K562 (cell line): ENCODE measurements at regions of chr1 and their contacts with region 1.

Region 1: DNA sequence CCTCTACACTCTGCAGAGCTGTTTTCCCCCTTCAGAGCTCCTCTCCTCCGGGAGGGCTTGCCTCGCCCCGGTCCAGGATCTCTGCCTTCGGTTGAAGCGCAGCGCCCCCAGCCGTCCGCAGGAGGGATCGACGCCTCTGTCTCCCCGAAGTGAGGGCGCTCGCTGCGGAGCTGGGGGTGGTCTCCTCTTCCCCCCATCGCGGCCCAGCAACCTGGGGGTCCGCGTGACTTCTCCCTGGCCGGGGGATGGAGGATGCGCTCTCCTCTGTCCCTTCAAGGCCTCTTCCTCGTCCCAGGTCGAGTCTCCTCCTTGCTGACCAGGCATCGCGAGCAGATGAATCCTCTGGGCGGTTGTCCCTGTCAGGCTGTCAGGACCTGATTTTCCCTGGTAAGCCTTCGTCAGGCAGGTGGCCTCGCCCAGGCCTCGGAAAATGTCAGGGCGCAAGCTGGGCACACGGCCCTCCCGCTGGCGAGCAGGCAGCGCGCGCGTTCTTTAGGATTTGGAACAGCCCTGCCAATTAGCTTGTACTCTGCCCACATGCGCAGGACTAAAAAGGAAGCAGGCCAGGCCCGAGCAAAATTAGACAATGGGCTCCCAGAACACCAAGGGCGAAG is 90.5 kb downstream of the EDEM3 start:
- DNase-seq: peak; percentile 74 to 82 (median 78)
- ATAC-seq: peak; percentile 98
- H3K4me3 ChIP-seq: no peak overlapping the region
- H3K27ac ChIP-seq: no peak overlapping the region
- H3K4me1 ChIP-seq: peaks cover 0 to 10% of the 10 kb centered on the region in 2 experiments; a peak in 2 of 5 replicates
- H3K27me3 ChIP-seq: peaks cover 6 to 10% of the 10 kb centered on the region in 2 experiments; a peak in 4 of 5 replicates
- CTCF ChIP-seq: peak; percentile 85 to 94 (median 91)
- EP300 ChIP-seq: no peak
- POLR2A ChIP-seq: no peak
- RAD21 ChIP-seq: peak; percentile 75 to 90

Region 2: GRCh38 chr1:183655562-183656075 is 1008.5 kb before region 1 on chr1:
- CTCF ChIA-PET with region 1: interaction called, 3 read pairs
- POLR2A ChIA-PET with region 1: no interaction called
- in situ Hi-C with region 1: no loop called
- intact Hi-C with region 1: loop called (anchors 5 kb)
- DNase-seq: peak; percentile 78 to 85 (median 83)
- ATAC-seq: peak; percentile 99
- H3K4me3 ChIP-seq: no peak overlapping the region
- H3K27ac ChIP-seq: no peak overlapping the region
- H3K4me1 ChIP-seq: no peaks in the 10 kb centered on the region
- H3K27me3 ChIP-seq: peaks cover 0 to 14% of the 10 kb centered on the region in 2 experiments; a peak in 1 of 5 replicates
- CTCF ChIP-seq: peak; percentile 82 to 95 (median 88)
- EP300 ChIP-seq: no peak
- POLR2A ChIP-seq: no peak
- RAD21 ChIP-seq: peak; percentile 84 to 91

Region 3: GRCh38 chr1:184075055-184076029 is 588.8 kb before region 1 on chr1:
- CTCF ChIA-PET with region 1: no interaction called
- POLR2A ChIA-PET with region 1: no interaction called
- in situ Hi-C with region 1: loop called (anchors 25 kb)
- intact Hi-C with region 1: loop called (anchors 5 kb)
- DNase-seq: peak; percentile 39 to 61 (median 45)
- ATAC-seq: peak; percentile 90
- H3K4me3 ChIP-seq: no peak overlapping the region
- H3K27ac ChIP-seq: no peak overlapping the region
- H3K4me1 ChIP-seq: no peaks in the 10 kb centered on the region
- H3K27me3 ChIP-seq: no peaks in the 10 kb centered on the region
- CTCF ChIP-seq: peak; percentile 50 to 87 (median 64); a peak in 4 of 6 replicates
- EP300 ChIP-seq: no peak
- POLR2A ChIP-seq: no peak
- RAD21 ChIP-seq: peak; percentile 84 to 86

Region 4: GRCh38 chr1:184379111-184379946 is 284.8 kb before region 1 on chr1:
- CTCF ChIA-PET with region 1: no interaction called
- POLR2A ChIA-PET with region 1: no interaction called
- in situ Hi-C with region 1: no loop called
- intact Hi-C with region 1: loop called (anchors 10 kb)
- DNase-seq: peak in 1 of 4 experiments; percentile 7
- ATAC-seq: peak; percentile 51; the same call in 2 of the 3 replicates
- H3K4me3 ChIP-seq: no peak overlapping the region
- H3K27ac ChIP-seq: no peak overlapping the region
- H3K4me1 ChIP-seq: no peaks in the 10 kb centered on the region
- H3K27me3 ChIP-seq: peaks cover 0 to 8% of the 10 kb centered on the region in 2 experiments; a peak in 3 of 5 replicates
- CTCF ChIP-seq: no peak
- EP300 ChIP-seq: no peak
- POLR2A ChIP-seq: no peak
- RAD21 ChIP-seq: no peak

Region 5: DNA sequence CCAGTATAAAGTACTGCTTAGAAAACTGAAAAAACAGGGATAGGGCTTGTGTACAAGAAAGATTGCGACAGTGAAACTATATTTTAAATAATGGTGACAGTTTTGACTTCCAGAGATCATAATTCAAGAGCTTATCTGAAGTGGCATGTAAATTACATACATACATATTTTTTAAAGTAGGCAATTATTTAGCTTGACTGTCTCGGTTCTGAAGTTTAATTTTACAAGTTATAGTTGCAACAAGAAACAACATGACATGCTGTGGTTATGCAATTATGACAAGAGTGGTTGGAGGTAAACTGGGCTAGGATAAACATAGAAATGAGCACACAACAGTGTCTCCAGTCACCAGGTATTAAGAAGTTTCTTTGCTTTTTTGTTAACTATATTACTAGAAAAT is 273.3 kb before region 1 on chr1:
- CTCF ChIA-PET with region 1: no interaction called
- POLR2A ChIA-PET with region 1: no interaction called
- in situ Hi-C with region 1: no loop called
- intact Hi-C with region 1: no loop called
- DNase-seq: no peak
- ATAC-seq: no peak
- H3K4me3 ChIP-seq: no peak overlapping the region
- H3K27ac ChIP-seq: no peak overlapping the region
- H3K4me1 ChIP-seq: peaks cover 0 to 16% of the 10 kb centered on the region in 2 experiments; a peak in 3 of 5 replicates
- H3K27me3 ChIP-seq: peaks cover 23 to 24% of the 10 kb centered on the region in 2 experiments; a peak in 4 of 5 replicates
- CTCF ChIP-seq: no peak
- EP300 ChIP-seq: no peak; the same call in 1 of the 2 replicates
- POLR2A ChIP-seq: no peak
- RAD21 ChIP-seq: no peak

Region 6: DNA sequence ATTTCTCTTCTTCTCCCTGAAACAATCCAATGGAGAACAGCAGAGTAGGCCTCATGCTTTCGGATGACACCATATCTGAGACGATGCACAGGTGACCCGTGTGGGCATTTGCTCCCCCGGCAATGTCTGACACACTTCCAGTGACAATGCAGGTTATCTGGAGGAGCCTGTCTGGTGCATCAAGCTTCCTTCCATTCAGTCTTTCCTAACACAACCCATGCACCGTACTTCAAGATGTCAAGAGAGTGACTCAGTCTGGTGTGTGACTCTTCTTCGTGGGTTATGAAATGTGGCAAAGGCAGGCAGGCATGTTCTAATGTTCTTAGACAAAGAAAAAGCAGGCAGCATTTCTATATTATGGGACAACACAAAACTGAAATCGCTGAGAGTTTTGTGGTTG is 68.6 kb before region 1 on chr1:
- CTCF ChIA-PET with region 1: no interaction called
- POLR2A ChIA-PET with region 1: no interaction called
- in situ Hi-C with region 1: no loop called
- intact Hi-C with region 1: loop called (anchors 5 kb)
- DNase-seq: no peak
- ATAC-seq: no peak
- H3K4me3 ChIP-seq: no peak overlapping the region
- H3K27ac ChIP-seq: no peak overlapping the region
- H3K4me1 ChIP-seq: no peaks in the 10 kb centered on the region; a peak in 1 of 5 replicates
- H3K27me3 ChIP-seq: peaks cover 8 to 14% of the 10 kb centered on the region in 2 experiments; a peak in 3 of 5 replicates
- CTCF ChIP-seq: no peak
- EP300 ChIP-seq: no peak
- POLR2A ChIP-seq: no peak
- RAD21 ChIP-seq: no peak

Region 7: DNA sequence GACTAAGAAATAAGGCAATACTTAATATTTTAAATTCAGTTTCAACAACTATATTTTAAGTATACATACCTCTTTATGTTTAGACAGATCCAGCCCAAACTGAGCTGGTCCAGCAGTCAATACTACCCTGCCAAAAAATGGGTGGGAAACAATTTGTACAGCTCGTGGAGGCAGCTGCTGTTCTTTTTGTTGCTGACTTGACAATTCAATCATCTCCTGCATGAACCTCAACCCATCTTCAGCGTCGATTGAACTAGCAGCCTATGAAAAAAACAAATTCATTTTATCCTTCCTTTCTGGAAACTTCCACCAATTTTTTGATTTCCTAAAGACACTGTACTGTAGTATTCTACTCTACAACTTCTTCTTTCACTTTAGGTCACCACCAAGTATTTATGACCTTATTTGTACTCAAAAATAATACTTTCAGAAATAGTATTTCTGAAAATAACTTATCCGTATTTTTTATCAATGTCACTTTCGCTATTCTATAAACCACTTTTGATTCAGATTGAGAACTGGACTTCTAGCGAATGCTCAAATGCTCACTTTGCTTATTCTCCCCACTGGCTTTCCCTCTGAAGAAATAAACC is 44.0 kb after region 1 on chr1:
- CTCF ChIA-PET with region 1: no interaction called
- POLR2A ChIA-PET with region 1: no interaction called
- in situ Hi-C with region 1: no loop called
- intact Hi-C with region 1: no loop called
- DNase-seq: no peak
- ATAC-seq: no peak
- H3K4me3 ChIP-seq: no peak overlapping the region
- H3K27ac ChIP-seq: no peak overlapping the region
- H3K4me1 ChIP-seq: no peaks in the 10 kb centered on the region
- H3K27me3 ChIP-seq: no peaks in the 10 kb centered on the region
- CTCF ChIP-seq: no peak
- EP300 ChIP-seq: no peak
- POLR2A ChIP-seq: no peak
- RAD21 ChIP-seq: no peak

Region 8: DNA sequence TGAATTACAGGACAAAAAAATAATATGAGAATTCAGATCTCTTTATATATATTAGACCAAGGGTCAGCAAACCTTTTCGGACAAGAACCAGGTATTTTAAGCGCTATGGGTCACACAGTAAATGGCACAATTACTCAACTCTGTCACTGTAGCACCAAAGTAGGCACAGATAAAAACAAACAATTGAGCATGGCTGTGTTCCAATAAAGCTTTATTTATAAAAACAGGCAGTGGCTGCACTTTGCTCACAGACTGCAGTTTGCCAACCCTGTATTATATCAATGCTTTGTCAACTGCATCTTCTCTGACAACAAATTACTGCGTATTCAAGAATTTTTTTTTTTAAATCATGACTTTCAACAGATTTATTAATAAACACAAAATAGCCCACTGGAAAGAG is 60.7 kb after region 1 on chr1:
- CTCF ChIA-PET with region 1: no interaction called
- POLR2A ChIA-PET with region 1: no interaction called
- in situ Hi-C with region 1: no loop called
- intact Hi-C with region 1: no loop called
- DNase-seq: no peak
- ATAC-seq: no peak
- H3K4me3 ChIP-seq: no peak overlapping the region
- H3K27ac ChIP-seq: no peak overlapping the region
- H3K4me1 ChIP-seq: no peaks in the 10 kb centered on the region
- H3K27me3 ChIP-seq: no peaks in the 10 kb centered on the region
- CTCF ChIP-seq: no peak
- EP300 ChIP-seq: no peak
- POLR2A ChIP-seq: no peak
- RAD21 ChIP-seq: no peak

Region 9: GRCh38 chr1:184982002-184982954 is 318.1 kb after region 1 on chr1:
- CTCF ChIA-PET with region 1: no interaction called
- POLR2A ChIA-PET with region 1: no interaction called
- in situ Hi-C with region 1: no loop called
- intact Hi-C with region 1: loop called (anchors 10 kb)
- DNase-seq: peak; percentile 63 to 88 (median 74)
- ATAC-seq: peak; percentile 100
- H3K4me3 ChIP-seq: no peak overlapping the region
- H3K27ac ChIP-seq: no peak overlapping the region
- H3K4me1 ChIP-seq: peaks cover 0 to 2% of the 10 kb centered on the region in 2 experiments; a peak in 2 of 5 replicates
- H3K27me3 ChIP-seq: peaks cover 0 to 2% of the 10 kb centered on the region in 2 experiments; a peak in 1 of 5 replicates
- CTCF ChIP-seq: peak; percentile 91 to 98 (median 98)
- EP300 ChIP-seq: peak; percentile 60; the same call in 1 of the 2 replicates
- POLR2A ChIP-seq: no peak
- RAD21 ChIP-seq: peak; percentile 98 to 99